ENCODE measurements at regions of chr19 and their contacts with region 1.

Region 1: GRCh38 chr19:57435062-57435978 is at the start of gene ZNF749:
- DNase-seq: peak; percentile 97
- ATAC-seq: peak; percentile 98
- H3K4me3 Mint-ChIP-seq: peak within 1 kb of the TSS; percentile 92
- H3K27ac Mint-ChIP-seq: peak within 1 kb of the TSS; percentile 89
- H3K4me1 Mint-ChIP-seq: peaks cover 21% of the 10 kb centered on the region
- H3K27me3 Mint-ChIP-seq: no peaks in the 10 kb centered on the region
- total RNA-seq, gene ZNF749: 10.6 to 17.9 TPM

Region 2: DNA sequence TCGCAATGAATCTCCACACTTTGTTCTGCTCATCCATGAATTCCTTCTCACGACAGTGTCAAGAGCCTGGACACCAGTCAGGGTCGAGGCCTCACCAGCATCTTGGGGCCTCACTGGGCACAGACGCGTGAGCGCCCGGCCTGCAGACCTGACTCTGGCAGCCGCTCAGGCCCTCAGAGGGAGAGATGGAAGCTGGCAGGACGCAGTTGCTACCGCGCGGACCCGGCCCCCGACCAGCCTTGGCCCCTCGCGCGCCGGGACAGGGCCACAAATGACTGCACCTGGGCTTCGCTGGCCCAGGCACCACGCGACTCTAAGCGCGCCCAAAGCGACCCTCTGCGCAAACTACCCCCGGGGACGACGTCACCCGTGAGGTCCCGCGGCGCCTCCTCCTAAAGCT is 316.5 kb before region 1 on chr19:
- CTCF ChIA-PET with region 1: no interaction called
- POLR2A ChIA-PET with region 1: no interaction called
- intact Hi-C with region 1: no loop called
- DNase-seq: no peak
- ATAC-seq: no peak
- H3K4me3 Mint-ChIP-seq: no peak overlapping the region
- H3K27ac Mint-ChIP-seq: no peak overlapping the region
- H3K4me1 Mint-ChIP-seq: no peaks in the 10 kb centered on the region
- H3K27me3 Mint-ChIP-seq: peaks cover 2% of the 10 kb centered on the region

Region 3: DNA sequence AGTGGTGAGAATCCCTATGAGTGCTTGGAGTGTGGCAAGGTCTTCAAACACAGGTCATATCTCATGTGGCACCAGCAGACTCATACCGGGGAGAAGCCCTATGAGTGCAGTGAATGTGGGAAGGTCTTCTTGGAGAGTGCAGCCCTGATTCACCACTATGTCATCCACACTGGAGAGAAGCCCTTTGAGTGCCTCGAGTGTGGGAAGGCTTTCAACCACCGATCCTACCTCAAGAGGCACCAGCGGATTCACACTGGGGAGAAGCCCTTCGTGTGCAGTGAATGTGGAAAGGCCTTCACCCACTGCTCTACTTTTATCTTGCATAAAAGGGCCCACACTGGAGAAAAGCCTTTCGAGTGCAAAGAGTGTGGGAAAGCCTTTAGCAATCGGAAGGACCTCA is 223.2 kb before region 1 on chr19:
- CTCF ChIA-PET with region 1: no interaction called
- POLR2A ChIA-PET with region 1: no interaction called
- intact Hi-C with region 1: no loop called
- DNase-seq: no peak
- ATAC-seq: no peak
- H3K4me3 Mint-ChIP-seq: no peak overlapping the region
- H3K27ac Mint-ChIP-seq: no peak overlapping the region
- H3K4me1 Mint-ChIP-seq: no peaks in the 10 kb centered on the region
- H3K27me3 Mint-ChIP-seq: no peaks in the 10 kb centered on the region

Region 4: DNA sequence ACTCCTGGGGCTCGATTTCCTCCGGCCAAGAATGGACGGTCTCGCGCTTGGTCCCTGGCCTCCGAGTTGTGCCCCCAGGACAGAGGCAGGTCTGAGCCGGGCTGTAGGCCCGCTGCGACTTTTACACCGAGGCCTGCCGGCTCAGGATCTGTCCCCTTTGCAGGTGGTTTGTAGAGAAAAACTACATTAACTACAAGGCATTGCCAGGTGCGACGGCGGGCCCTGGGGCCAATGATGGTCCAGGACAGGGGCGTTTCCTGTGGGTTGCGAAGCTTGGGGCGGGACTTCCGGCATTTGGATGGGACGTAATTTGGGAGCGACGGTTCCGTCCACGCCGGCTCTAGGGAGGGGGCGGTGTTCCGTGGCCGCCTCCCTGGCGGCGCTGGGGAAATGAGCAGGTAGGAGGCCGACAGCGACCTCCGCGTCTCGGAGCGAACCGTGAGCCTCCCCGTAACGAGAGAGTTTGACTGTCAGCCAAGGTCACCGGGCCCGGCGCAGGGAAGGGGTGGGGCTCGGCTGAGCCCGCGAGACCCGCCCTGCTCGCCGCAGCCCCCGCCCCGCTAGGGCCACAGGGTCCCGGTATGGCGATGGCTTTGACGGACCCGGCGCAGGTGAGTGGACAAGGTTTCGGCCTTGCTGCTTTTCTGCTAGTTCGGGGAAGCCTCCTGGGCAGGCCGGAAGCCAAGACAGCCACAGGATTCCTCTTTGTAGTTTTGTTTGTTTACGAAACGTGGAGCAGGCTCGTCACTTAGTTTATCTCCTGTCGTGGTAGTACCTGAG is 194.8 kb before region 1 on chr19 and contains the start of gene ZNF805:
- CTCF ChIA-PET with region 1: no interaction called
- POLR2A ChIA-PET with region 1: no interaction called
- intact Hi-C with region 1: loop called (anchors 1 kb)
- DNase-seq: peak; percentile 97
- ATAC-seq: peak; percentile 95
- H3K4me3 Mint-ChIP-seq: peak within 1 kb of the TSS; percentile 80
- H3K27ac Mint-ChIP-seq: peak within 1 kb of the TSS; percentile 92
- H3K4me1 Mint-ChIP-seq: peaks cover 23% of the 10 kb centered on the region
- H3K27me3 Mint-ChIP-seq: no peaks in the 10 kb centered on the region
- total RNA-seq, gene ZNF805: 6.4 to 7.1 TPM

Region 5: GRCh38 chr19:57389730-57390598 is 45.4 kb before region 1 on chr19 and contains the start of gene ZNF548:
- CTCF ChIA-PET with region 1: no interaction called
- POLR2A ChIA-PET with region 1: interaction called, 3 read pairs
- intact Hi-C with region 1: loop called (anchors 1 kb)
- DNase-seq: peak; percentile 97
- ATAC-seq: peak; percentile 99
- H3K4me3 Mint-ChIP-seq: peak within 1 kb of the TSS; percentile 90
- H3K27ac Mint-ChIP-seq: peak within 1 kb of the TSS; percentile 94
- H3K4me1 Mint-ChIP-seq: peaks cover 26% of the 10 kb centered on the region
- H3K27me3 Mint-ChIP-seq: no peaks in the 10 kb centered on the region
- total RNA-seq, gene ZNF548: 15.1 to 20.3 TPM

Region 6: DNA sequence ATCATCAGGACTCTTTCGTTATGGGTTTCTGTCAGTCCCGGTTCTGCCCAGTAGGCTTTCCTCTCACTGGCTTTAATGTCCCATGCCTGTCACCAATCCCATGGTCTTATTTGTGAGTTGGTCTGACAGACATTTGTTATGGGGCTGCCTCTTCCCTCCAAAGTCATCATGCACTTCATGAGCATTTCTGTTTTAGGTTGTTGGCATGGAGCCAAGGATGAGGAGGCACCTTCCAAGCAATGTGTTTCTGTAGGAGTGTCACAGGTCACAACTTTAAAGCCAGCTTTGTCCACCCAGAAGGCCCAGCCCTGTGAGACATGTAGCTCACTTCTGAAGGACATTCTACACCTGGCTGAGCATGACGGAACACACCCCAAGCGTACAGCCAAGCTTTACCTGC is 15.9 kb before region 1 on chr19:
- CTCF ChIA-PET with region 1: no interaction called
- POLR2A ChIA-PET with region 1: no interaction called
- intact Hi-C with region 1: no loop called
- DNase-seq: no peak
- ATAC-seq: no peak
- H3K4me3 Mint-ChIP-seq: no peak overlapping the region
- H3K27ac Mint-ChIP-seq: no peak overlapping the region
- H3K4me1 Mint-ChIP-seq: no peaks in the 10 kb centered on the region
- H3K27me3 Mint-ChIP-seq: no peaks in the 10 kb centered on the region

Region 7: GRCh38 chr19:57559404-57560025 is 124.2 kb after region 1 on chr19 and contains the start of gene ZNF550:
- CTCF ChIA-PET with region 1: no interaction called
- POLR2A ChIA-PET with region 1: no interaction called
- intact Hi-C with region 1: loop called in 1 of 2 experiments (anchors 1 kb)
- DNase-seq: peak; percentile 93
- ATAC-seq: peak; percentile 97
- H3K4me3 Mint-ChIP-seq: peak within 1 kb of the TSS; percentile 98
- H3K27ac Mint-ChIP-seq: peak within 1 kb of the TSS; percentile 93
- H3K4me1 Mint-ChIP-seq: peaks cover 22% of the 10 kb centered on the region
- H3K27me3 Mint-ChIP-seq: no peaks in the 10 kb centered on the region
- total RNA-seq, gene ZNF550: 11.8 to 11.9 TPM

Region 8: DNA sequence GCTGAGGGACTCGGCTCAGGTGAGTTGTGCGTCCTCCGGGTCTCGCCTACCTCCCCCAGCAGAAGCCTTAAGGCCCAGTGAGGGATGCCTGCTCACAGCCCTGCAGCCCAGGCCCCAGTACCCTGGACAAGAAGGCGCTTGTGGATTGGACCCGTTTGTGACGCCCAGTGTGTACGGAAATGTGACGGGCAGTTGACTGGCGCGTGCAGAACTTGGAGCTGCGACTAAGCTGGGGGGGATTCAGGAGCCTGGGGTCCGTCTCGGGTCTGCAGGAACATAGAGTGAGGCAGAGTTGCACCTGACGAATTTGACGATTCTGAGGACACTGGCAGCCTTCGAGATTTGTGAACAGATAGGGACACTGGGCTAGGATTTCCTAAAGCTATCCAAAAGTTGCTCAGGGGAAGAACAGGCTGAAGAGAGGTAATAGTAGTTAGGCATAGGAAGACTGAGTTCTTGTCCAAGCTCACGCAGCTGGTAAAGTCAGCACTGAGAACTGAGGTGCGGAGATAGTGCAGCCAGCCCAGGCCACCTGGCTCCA is 247.0 kb after region 1 on chr19:
- CTCF ChIA-PET with region 1: no interaction called
- POLR2A ChIA-PET with region 1: no interaction called
- intact Hi-C with region 1: loop called in 1 of 2 experiments (anchors 1 kb)
- DNase-seq: no peak
- ATAC-seq: no peak
- H3K4me3 Mint-ChIP-seq: peak overlapping the region; percentile 85
- H3K27ac Mint-ChIP-seq: peak overlapping the region; percentile 93
- H3K4me1 Mint-ChIP-seq: peaks cover 31% of the 10 kb centered on the region
- H3K27me3 Mint-ChIP-seq: peaks cover under 1% of the 10 kb centered on the region

Region 9: DNA sequence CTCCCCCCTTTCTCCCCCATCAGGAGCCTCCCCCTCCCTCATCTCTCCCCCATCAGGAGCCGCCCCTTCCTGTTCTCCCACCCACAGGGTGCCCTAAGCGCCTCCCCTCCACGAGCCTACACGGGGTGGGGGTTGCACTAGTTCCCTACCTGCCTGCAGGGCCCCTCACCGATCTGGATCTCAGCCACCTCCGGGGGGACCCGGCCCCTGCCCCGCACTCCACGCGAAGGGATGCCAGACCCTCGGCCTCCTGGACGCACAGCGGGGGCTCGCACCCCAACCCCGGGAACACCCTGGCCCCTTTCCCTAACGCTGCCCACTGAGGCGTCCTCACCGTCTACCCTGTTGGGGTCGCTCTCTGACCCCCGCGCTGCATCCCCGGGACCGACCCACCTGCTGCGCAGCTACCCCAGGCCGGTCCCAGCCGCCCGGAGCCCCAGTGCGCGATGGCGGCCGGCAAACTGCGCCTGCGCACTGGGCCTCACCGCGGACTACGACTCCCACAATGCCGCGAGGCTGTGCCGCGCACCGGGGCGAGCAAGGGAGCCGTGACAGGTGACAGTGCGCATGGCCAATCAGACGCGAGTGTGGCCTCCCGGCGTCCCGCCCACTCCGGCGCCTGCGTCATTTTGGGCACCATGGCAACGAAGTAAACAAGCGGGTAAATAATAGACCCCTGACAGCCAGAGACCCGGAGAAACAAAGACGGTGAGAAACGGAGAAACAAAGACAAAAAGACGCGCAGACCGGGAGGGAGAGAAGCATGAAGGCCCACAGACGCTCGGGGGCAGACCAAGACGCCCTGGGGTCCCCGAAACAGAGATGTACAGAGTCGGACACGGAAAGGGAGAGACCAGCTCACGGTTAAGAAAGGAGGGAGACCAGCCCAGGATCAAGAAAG is 662.7 kb after region 1 on chr19 and contains the start of gene ZSCAN18:
- CTCF ChIA-PET with region 1: no interaction called
- POLR2A ChIA-PET with region 1: no interaction called
- intact Hi-C with region 1: loop called in 1 of 2 experiments (anchors 1 kb)
- DNase-seq: peak; percentile 97
- ATAC-seq: peak; percentile 99
- H3K4me3 Mint-ChIP-seq: peak within 1 kb of the TSS; percentile 82
- H3K27ac Mint-ChIP-seq: peak within 1 kb of the TSS; percentile 97
- H3K4me1 Mint-ChIP-seq: peaks cover 13% of the 10 kb centered on the region
- H3K27me3 Mint-ChIP-seq: no peaks in the 10 kb centered on the region
- total RNA-seq, gene ZSCAN18: 23.1 to 29.2 TPM

Region 10: DNA sequence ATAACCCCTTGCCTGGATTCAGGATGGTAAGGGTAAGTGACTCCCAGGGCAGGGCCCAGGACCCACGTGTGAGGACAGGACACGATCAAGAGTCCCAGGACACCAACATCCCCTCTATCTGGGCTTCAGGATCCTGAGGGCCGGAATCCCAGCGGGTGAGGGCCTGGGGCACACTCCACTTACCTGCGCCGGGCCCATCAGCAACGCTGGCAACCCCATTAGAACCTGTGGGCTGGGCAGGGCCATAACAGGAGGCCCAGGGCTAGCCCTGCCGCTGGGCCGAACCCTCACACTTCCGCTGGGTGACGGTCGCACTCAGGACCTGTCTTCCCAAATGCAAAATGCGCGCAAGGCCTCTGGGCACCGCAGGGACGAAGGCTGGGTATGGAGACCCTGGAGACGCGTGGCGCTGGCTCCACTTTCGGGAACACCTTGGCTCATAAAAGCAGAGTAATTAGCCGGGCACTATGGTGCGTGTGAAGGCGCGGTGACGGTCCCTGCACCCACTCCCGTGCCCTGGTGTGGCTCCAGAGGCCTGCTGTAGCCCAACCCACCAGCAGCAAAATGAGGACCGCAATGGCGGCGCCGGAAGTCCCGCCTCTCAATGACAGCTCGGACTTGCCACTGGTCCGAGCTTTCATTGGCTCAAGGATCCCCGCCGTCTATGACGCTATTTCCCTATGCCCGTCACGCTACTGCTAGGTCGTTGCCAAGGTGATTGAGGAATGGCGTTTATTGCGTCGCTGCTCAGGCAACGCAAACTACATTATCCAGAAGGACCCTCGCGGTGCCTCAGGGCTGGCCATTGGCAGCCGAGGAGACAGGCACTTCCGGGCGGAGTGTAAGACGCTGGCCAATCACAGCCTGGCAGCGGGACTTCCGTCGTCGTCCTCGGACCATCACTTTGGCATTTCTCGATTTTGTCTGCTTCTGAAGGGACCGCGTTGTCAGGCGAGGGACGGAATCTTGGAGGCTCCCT is 1004.5 kb after region 1 on chr19 and contains the start of gene ZNF132:
- CTCF ChIA-PET with region 1: no interaction called
- POLR2A ChIA-PET with region 1: no interaction called
- intact Hi-C with region 1: loop called in 1 of 2 experiments (anchors 1 kb)
- DNase-seq: peak; percentile 96
- ATAC-seq: peak; percentile 98
- H3K4me3 Mint-ChIP-seq: peak within 1 kb of the TSS; percentile 82
- H3K27ac Mint-ChIP-seq: peak within 1 kb of the TSS; percentile 95
- H3K4me1 Mint-ChIP-seq: peaks cover 29% of the 10 kb centered on the region
- H3K27me3 Mint-ChIP-seq: no peaks in the 10 kb centered on the region
- total RNA-seq, gene ZNF132: 3.3 to 4.4 TPM